ENCODE measurements at regions of chr9 and their contacts with region 1.

Region 1: GRCh38 chr9:70170151-70170790 is 88.5 kb upstream of the SMC5 start:
- DNase-seq: no peak
- H3K4me3 Mint-ChIP-seq: no peak overlapping the region
- H3K27ac Mint-ChIP-seq: no peak overlapping the region
- H3K4me1 Mint-ChIP-seq: no peaks in the 10 kb centered on the region
- H3K27me3 Mint-ChIP-seq: no peaks in the 10 kb centered on the region

Region 2: GRCh38 chr9:70136632-70137031 is 33.6 kb before region 1 on chr9:
- CTCF ChIA-PET with region 1: no interaction called
- POLR2A ChIA-PET with region 1: no interaction called
- intact Hi-C with region 1: no loop called
- DNase-seq: no peak
- H3K4me3 Mint-ChIP-seq: no peak overlapping the region
- H3K27ac Mint-ChIP-seq: no peak overlapping the region
- H3K4me1 Mint-ChIP-seq: no peaks in the 10 kb centered on the region
- H3K27me3 Mint-ChIP-seq: no peaks in the 10 kb centered on the region

Region 3: DNA sequence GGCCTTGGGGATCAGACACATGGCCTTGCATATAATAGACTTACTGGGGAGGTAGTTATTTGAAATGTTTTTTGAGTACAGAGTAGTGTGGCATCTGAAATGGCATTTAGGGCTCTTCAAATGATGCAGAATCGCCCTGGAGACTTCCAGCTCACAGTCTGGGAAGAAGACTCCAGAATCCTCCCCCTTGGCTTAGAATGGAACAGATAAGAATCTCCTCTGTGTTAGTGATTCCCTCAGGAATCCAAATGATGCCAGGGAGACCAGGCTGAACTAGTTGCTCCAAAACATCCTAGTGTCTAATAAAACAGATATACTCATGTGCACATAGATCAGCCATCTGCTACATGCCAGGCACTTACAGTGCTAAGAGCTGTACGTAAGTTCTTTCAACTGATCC is 49.9 kb after region 1 on chr9:
- CTCF ChIA-PET with region 1: no interaction called
- POLR2A ChIA-PET with region 1: no interaction called
- intact Hi-C with region 1: loop called (anchors 5 kb)
- DNase-seq: no peak
- H3K4me3 Mint-ChIP-seq: no peak overlapping the region
- H3K27ac Mint-ChIP-seq: no peak overlapping the region
- H3K4me1 Mint-ChIP-seq: no peaks in the 10 kb centered on the region
- H3K27me3 Mint-ChIP-seq: no peaks in the 10 kb centered on the region

Measured in activated CD4-positive, alpha-beta memory T cell treated with anti-CD3 and anti-CD28 coated beads for 36 hours (primary cell).